GM13976 (cell line): ENCODE measurements at regions of chr18 and their contacts with region 1.

Region 1: GRCh38 chr18:70442933-70443332 is 154.1 kb downstream of the SOCS6 start:
- DNase-seq: no peak
- CTCF ChIP-seq: no peak

Region 2: GRCh38 chr18:70205421-70206397 is 237.2 kb before region 1 on chr18 and contains the start of gene RTTN:
- in situ Hi-C with region 1: loop called (anchors 10 kb)
- DNase-seq: peak; percentile 89
- CTCF ChIP-seq: no peak

Region 3: GRCh38 chr18:71471963-71472725 is 1029.2 kb after region 1 on chr18:
- in situ Hi-C with region 1: no loop called
- DNase-seq: no peak
- CTCF ChIP-seq: no peak